ENCODE measurements at regions of chr13 and their contacts with region 1.

Region 1: DNA sequence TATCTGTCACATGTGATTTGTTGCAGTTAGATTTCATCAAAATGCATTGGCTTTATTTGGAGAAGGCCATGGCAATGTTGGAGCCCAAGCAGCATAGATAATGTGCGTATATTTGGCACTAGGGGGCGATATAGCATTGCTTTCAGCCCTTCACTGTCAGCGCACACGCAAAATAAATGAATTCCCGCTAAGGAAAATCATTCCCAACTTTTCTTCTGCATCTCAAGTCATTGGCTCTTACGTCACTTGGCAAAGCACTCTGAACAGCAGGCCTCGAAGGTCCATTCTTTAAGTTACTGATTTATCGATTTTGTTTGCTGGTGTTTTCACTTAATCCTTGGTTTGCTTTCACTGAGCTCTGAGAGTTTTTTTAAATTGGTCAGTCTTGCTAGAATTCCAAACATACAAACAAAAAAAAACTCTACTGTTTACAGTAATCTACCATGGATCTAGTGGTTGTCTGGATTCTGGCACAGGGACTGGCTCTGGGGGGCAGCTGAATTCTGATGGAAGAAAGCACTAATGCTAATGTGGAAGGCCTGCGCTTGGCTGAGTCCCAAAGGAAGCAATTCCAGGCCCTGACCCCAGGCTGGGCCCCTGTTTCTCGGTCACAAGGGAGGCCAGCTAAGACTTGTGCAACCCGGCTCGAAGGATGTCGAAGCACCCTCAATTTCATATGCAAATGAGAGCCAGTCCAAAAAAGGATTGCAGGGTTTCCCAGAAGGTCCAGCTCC is 97.7 kb upstream of the IPO5 start:
- DNase-seq: peak; percentile 23 to 68 (median 44)
- ATAC-seq: peak; percentile 71 to 86 (median 84)
- H3K4me3 ChIP-seq: no peak overlapping the region
- H3K27ac ChIP-seq: no peak overlapping the region
- H3K4me1 ChIP-seq: peaks cover 0 to 18% (median 3%) of the 10 kb centered on the region in 12 donors
- H3K27me3 ChIP-seq: no peaks in the 10 kb centered on the region
- CTCF ChIP-seq: peak; percentile 72 to 93 (median 86)
- POLR2A ChIP-seq: no peak

Region 2: DNA sequence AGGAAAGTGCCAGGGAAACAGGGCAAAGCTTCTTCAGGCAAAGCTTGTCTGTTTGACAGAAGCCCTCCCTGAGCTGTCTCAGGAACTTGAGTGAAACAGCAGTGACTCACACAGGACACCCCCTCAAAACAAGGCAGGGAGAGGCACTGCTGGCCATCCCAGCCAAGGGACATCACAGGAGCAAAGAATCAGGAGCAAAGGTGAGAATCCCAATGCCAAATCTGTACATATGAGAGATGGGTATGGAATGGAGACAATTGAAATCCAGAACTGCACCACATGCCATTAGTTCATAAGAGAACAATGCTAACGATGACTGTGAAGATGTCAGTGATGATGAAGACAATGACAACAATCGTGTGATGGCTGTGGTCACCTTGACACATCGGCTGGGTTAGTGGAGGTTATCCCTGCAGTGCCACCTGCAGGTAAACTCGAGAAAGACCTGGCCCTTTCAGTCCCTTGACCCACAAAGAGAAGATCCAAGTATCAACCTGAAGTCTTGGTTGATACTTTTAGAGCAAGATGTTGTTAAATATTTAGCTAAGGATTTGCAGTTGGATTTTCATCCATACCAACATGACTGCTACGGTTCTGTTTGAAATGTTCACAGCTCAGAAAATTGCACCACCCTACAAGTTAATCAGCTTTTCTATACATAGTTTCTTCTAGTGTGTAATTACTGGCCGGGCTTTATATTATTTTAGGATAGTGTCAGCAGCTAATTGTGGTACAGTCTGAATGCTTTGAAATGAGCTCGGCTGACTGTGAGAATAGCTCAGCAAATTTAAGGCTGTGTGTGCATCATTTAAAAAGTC is 55.8 kb after region 1 on chr13:
- intact Hi-C with region 1: loop called in 4 of 10 experiments (anchors 2 to 5 kb)
- DNase-seq: no peak
- ATAC-seq: peak in 1 of 4 donors; percentile 36
- H3K4me3 ChIP-seq: no peak overlapping the region
- H3K27ac ChIP-seq: no peak overlapping the region
- H3K4me1 ChIP-seq: no peaks in the 10 kb centered on the region
- H3K27me3 ChIP-seq: no peaks in the 10 kb centered on the region
- CTCF ChIP-seq: peak in 9 of 12 donors; percentile 20 to 46 (median 36)
- POLR2A ChIP-seq: no peak

Region 3: DNA sequence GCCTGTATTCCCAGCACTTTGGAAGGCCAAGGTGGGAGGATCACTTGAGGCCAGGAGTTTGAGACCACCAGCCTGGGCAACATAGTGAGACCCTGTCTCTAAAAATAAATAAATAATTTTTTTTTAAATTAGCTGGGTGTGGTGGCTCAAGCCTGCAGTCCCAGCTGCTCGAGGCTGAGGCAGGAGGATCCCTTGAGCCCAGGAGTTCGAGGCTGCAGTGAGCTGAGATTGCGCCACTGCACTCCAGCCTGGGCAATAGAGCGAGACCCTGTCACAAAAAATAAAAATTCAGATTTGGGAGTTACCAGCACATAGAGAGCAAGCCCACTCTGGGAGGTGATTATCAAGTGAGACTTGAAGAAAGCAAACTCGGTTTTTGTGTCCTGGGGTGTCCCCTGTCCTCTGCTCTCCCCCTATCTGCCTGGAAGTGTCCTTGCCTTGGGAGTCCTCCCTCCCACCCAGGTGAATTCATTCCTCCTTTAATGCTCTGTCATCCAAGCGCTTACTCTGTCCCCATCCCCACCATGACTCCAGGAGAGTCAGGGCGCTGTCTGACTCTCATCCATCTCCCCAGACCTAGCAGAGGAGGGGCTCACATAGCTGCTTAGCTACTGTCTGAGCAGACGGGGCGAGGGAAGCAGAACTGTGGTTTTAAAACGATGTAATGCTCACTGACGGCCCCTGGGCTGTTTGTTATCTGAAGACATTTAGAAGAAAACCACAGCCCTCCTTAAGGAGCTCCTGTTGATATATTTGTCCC is 574.4 kb after region 1 on chr13:
- intact Hi-C with region 1: loop called in 1 of 10 experiments (anchors 10 kb)
- DNase-seq: no peak
- ATAC-seq: no peak
- H3K4me3 ChIP-seq: no peak overlapping the region
- H3K27ac ChIP-seq: no peak overlapping the region
- H3K4me1 ChIP-seq: peaks cover 0 to 9% (median 0%) of the 10 kb centered on the region in 12 donors
- H3K27me3 ChIP-seq: no peaks in the 10 kb centered on the region
- CTCF ChIP-seq: no peak
- POLR2A ChIP-seq: no peak

Region 4: GRCh38 chr13:98664924-98665637 is 809.3 kb after region 1 on chr13:
- intact Hi-C with region 1: loop called in 9 of 10 experiments (anchors 5 to 10 kb)
- DNase-seq: no peak
- ATAC-seq: no peak
- H3K4me3 ChIP-seq: no peak overlapping the region
- H3K27ac ChIP-seq: no peak overlapping the region
- H3K4me1 ChIP-seq: no peaks in the 10 kb centered on the region
- H3K27me3 ChIP-seq: no peaks in the 10 kb centered on the region
- CTCF ChIP-seq: no peak
- POLR2A ChIP-seq: no peak

Region 5: GRCh38 chr13:98842864-98843481 is 987.2 kb after region 1 on chr13:
- intact Hi-C with region 1: loop called in 4 of 10 experiments (anchors 2 to 10 kb)
- DNase-seq: peak; percentile 65 to 82 (median 72)
- ATAC-seq: peak; percentile 75 to 87 (median 84)
- H3K4me3 ChIP-seq: no peak overlapping the region
- H3K27ac ChIP-seq: no peak overlapping the region
- H3K4me1 ChIP-seq: peaks cover 0 to 14% (median 0%) of the 10 kb centered on the region in 12 donors
- H3K27me3 ChIP-seq: no peaks in the 10 kb centered on the region
- CTCF ChIP-seq: peak; percentile 79 to 90 (median 83)
- POLR2A ChIP-seq: no peak